Calu3 (cell line): ENCODE measurements at regions of chr2 and their contacts with region 1.

Region 1: GRCh38 chr2:86298411-86299379 is 38.7 kb downstream of the REEP1 start:
- DNase-seq: no peak
- H3K4me3 Mint-ChIP-seq: no peak overlapping the region
- H3K27ac Mint-ChIP-seq: no peak overlapping the region
- H3K4me1 Mint-ChIP-seq: no peaks in the 10 kb centered on the region
- H3K27me3 Mint-ChIP-seq: peaks cover 20% of the 10 kb centered on the region
- CTCF ChIP-seq: no peak

Region 2: DNA sequence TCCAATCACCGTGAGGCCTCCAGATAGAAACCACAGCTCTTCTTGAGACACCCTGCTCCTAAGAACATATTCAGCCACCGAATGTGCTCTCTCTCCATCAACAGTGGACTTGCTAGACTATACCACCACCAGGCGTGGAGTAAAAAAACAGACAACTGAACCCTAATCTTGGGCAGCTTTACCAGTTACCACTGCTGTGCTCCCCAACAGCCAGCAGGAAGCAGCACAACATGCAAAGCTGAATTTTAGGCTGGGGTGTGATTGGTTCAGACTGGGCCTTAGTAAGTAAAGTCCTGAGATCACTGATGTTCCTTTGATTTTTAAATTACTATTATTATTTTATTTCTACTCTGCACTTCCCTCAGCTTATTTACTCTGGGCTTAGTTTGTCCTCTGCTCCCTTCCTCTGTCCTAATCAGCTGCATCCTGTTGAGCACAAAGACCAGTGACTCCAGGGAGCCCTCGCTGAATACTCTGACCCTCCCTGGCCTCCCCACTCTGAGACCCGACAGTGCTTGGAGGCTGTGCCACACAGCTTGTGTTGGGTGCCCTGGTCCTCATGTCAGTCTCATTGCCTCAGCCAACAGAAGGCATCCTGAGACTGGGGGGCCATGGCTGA is 77.5 kb before region 1 on chr2:
- CTCF ChIA-PET with region 1: no interaction called
- intact Hi-C with region 1: loop called (anchors 5 kb)
- DNase-seq: peak; percentile 62
- H3K4me3 Mint-ChIP-seq: no peak overlapping the region
- H3K27ac Mint-ChIP-seq: no peak overlapping the region
- H3K4me1 Mint-ChIP-seq: no peaks in the 10 kb centered on the region
- H3K27me3 Mint-ChIP-seq: no peaks in the 10 kb centered on the region
- CTCF ChIP-seq: peak; percentile 85

Region 3: DNA sequence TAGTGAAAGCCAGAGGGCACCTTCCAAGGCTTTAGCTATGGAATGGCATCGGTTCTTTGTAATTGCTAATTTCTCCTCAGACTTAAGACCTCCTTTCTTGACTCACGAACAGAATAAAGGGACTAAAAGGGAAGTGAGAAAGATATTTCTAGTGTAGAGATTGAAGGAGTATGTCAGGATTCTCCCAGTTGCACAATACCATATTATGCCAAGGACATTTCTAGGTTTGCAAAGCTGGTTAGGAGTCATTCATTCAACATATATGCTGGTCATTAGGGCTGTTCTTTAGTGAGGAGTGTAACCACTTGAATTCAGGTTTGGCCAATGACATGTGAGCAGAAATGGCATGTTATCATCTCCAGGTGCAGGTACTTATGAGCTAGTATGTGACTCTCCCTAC is 31.3 kb after region 1 on chr2:
- CTCF ChIA-PET with region 1: no interaction called
- intact Hi-C with region 1: no loop called
- DNase-seq: no peak
- H3K4me3 Mint-ChIP-seq: no peak overlapping the region
- H3K27ac Mint-ChIP-seq: no peak overlapping the region
- H3K4me1 Mint-ChIP-seq: no peaks in the 10 kb centered on the region
- H3K27me3 Mint-ChIP-seq: peaks cover 8% of the 10 kb centered on the region
- CTCF ChIP-seq: no peak

Region 4: DNA sequence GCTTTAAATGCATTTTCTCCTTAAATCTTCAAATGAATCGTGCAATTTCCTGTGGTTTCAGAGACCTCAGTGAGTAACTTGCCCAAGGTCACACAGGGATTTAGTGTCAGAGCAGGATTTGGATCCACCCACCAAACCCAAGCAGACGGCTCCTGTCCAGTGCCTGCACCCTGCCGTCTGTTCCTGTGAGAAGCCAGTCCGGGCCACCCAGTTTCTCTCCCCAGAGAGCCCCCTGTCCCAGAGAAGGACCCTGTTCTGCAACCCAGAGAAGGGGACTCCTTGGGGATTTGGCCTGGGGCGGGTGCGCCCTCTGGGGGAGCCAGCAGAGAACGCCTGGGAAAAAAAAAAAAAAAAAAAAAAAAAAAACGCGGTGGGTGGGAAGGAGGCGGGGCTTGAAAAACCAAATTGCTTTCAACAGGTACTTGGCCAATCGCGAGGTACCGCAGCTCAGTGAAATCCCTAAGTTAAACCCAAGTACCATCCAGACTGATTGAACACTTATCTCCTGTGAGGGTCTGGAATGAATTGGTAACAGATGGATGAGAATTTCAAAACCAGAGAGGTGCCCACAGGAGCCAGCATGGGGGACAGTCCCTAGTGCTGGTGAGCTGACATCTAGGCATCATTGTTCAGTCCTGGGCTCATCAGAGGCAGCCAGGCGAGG is 69.6 kb after region 1 on chr2:
- CTCF ChIA-PET with region 1: interaction called, 3 read pairs
- intact Hi-C with region 1: loop called (anchors 5 kb)
- DNase-seq: peak; percentile 49
- H3K4me3 Mint-ChIP-seq: peak overlapping the region; percentile 21
- H3K27ac Mint-ChIP-seq: no peak overlapping the region
- H3K4me1 Mint-ChIP-seq: peaks cover 13% of the 10 kb centered on the region
- H3K27me3 Mint-ChIP-seq: peaks cover 3% of the 10 kb centered on the region
- CTCF ChIP-seq: peak; percentile 69